ENCODE measurements at regions of chr16 and their contacts with region 1.

Region 1: DNA sequence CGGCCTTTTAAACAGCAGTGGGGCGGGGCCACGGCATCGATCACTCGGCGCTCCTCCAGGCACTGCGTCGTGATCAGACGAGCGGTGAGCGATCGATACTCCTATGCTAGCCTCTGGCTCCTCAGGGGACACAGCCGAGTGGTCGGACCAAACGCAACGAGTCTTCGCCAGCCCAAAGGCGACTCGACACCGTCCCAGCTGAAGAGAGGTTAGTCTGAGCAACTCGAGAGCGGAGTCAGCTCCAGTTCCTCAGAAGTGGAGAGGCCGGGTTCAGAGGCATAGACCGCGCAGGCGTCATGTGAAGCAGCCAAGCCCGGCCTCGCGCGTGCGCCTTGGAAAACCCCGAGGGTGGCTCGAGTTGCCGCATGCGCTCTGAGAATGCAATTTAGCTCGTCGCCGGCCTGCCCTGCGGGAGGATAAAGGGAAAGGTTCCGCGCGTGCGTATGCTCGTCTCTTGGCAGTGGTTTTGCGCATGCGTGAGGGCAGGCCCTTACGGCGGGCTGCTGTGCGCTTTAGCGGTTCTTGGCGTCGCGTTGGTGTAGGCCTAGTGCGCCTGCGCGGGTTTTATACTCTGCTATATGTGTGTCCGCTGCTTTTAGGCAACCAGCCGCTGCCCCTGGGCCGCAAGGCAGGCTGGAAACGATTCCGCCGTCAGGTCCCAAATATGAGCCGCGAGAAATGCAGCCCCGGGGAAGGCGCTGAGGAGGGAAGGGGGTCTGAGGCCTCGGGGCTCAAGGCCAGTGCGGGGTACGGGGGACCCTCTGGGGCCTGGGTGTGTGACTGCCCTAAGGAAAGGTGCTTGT is at the start of gene KDM8:
- DNase-seq: peak; percentile 98 to 100 (median 100)
- ATAC-seq: peak; percentile 79 to 83
- H3K4me3 Mint-ChIP-seq: peak within 1 kb of the TSS; percentile 85 to 100 (median 98)
- H3K27ac Mint-ChIP-seq: peak within 1 kb of the TSS; percentile 97 to 100 (median 100)
- H3K4me1 Mint-ChIP-seq: peaks cover 21 to 70% (median 61%) of the 10 kb centered on the region in 4 donors
- H3K27me3 Mint-ChIP-seq: peaks cover 0 to 3% (median 0%) of the 10 kb centered on the region in 5 donors
- polyA plus RNA-seq, gene KDM8: 3.8 to 6.2 (median 5.6) TPM

Region 2: DNA sequence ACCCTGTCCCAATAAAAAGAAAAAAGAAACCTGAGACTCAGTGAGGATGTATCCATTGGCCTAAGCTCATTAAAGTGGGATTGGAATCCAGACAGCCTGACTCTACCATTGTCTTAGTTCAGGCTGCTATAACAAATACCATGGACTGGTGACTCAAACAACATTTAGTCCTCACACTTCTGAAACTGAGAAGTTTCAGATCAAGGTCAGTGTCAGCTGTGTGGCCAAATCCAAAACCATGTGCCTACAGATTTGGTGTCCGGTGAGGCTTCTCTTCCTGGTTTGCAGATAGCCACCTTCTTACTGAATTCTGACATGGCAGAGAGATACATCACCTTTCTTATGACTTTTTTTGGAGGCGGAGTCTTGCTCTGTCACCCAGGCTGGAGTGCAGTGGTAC is 53.6 kb before region 1 on chr16:
- POLR2A ChIA-PET with region 1: no interaction called
- DNase-seq: no peak
- ATAC-seq: no peak
- H3K4me3 Mint-ChIP-seq: no peak overlapping the region
- H3K27ac Mint-ChIP-seq: no peak overlapping the region
- H3K4me1 Mint-ChIP-seq: peaks cover 7 to 17% (median 11%) of the 10 kb centered on the region in 4 donors
- H3K27me3 Mint-ChIP-seq: peaks cover 0 to 4% (median 0%) of the 10 kb centered on the region in 5 donors

Region 3: GRCh38 chr16:27169511-27170071 is 34.0 kb before region 1 on chr16:
- POLR2A ChIA-PET with region 1: interaction called, 19 read pairs
- DNase-seq: peak; percentile 34 to 91 (median 82)
- ATAC-seq: peak; percentile 92
- H3K4me3 Mint-ChIP-seq: peak overlapping the region; percentile 48 to 80 (median 68)
- H3K27ac Mint-ChIP-seq: peak overlapping the region; percentile 70 to 98 (median 96)
- H3K4me1 Mint-ChIP-seq: peaks cover 26 to 73% (median 67%) of the 10 kb centered on the region in 4 donors
- H3K27me3 Mint-ChIP-seq: no peaks in the 10 kb centered on the region

Region 4: DNA sequence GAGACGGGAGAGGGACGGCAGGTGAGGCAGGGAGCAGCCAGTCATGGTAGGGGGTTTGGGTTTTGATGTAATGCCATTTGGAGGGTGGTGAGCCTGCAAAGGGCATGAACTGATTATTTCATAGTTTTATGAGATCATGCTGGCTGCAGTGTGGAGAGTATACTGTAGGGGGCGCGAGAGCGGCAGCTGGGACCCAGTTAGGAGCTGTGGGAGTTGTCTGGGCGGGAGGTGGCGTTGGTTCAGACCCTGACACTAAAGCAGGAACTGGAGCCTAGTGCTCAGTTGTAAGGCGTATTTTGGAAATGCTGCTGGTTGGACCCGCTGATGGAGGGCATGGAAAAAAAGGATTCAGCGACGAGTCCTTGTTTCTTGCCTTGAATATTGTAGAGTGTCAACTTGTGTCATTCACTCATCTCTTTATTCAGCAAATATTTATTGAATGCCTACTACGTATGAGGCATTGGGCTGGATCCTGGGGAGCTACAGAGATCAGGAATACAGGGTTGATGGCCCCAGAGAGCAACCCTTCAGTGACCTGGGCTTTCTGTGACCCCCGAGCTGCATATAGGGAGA is 24.0 kb before region 1 on chr16:
- POLR2A ChIA-PET with region 1: interaction called, 35 read pairs
- DNase-seq: peak; percentile 76 to 93 (median 86)
- ATAC-seq: peak; percentile 98 to 99
- H3K4me3 Mint-ChIP-seq: peak overlapping the region in 6 of 10 donors; percentile 0 to 30 (median 3)
- H3K27ac Mint-ChIP-seq: peak overlapping the region; percentile 53 to 92 (median 83)
- H3K4me1 Mint-ChIP-seq: peaks cover 23 to 40% (median 36%) of the 10 kb centered on the region in 4 donors
- H3K27me3 Mint-ChIP-seq: no peaks in the 10 kb centered on the region

Region 5: DNA sequence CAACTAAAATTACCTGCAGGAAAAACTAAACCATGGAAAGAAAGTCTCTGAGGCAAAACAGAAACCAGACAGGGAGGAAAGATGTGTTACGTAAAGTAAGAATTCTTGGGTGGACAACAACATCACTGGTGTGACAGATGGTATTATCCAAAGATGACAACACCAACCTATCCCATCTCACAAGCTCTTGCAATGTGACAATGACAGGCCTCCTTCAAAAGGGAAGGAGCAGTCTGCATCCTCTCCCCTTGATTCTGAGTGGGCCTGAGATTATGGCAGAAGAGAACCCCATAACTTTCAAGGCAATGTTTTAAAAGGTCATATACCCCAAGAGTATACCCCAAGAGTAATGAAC is 17.9 kb before region 1 on chr16:
- POLR2A ChIA-PET with region 1: interaction called, 15 read pairs
- DNase-seq: no peak
- ATAC-seq: no peak
- H3K4me3 Mint-ChIP-seq: no peak overlapping the region
- H3K27ac Mint-ChIP-seq: peak overlapping the region in 1 of 10 donors; percentile 32
- H3K4me1 Mint-ChIP-seq: peaks cover 5 to 22% (median 12%) of the 10 kb centered on the region in 4 donors
- H3K27me3 Mint-ChIP-seq: no peaks in the 10 kb centered on the region

Region 6: GRCh38 chr16:27213776-27214427 is 10.3 kb after region 1 on chr16:
- POLR2A ChIA-PET with region 1: interaction called, 10 read pairs
- DNase-seq: no peak
- ATAC-seq: no peak
- H3K4me3 Mint-ChIP-seq: peak overlapping the region in 1 of 10 donors; percentile 26
- H3K27ac Mint-ChIP-seq: peak overlapping the region in 6 of 10 donors; percentile 17 to 93 (median 60)
- H3K4me1 Mint-ChIP-seq: peaks cover 4 to 37% (median 16%) of the 10 kb centered on the region in 4 donors
- H3K27me3 Mint-ChIP-seq: no peaks in the 10 kb centered on the region

Region 7: DNA sequence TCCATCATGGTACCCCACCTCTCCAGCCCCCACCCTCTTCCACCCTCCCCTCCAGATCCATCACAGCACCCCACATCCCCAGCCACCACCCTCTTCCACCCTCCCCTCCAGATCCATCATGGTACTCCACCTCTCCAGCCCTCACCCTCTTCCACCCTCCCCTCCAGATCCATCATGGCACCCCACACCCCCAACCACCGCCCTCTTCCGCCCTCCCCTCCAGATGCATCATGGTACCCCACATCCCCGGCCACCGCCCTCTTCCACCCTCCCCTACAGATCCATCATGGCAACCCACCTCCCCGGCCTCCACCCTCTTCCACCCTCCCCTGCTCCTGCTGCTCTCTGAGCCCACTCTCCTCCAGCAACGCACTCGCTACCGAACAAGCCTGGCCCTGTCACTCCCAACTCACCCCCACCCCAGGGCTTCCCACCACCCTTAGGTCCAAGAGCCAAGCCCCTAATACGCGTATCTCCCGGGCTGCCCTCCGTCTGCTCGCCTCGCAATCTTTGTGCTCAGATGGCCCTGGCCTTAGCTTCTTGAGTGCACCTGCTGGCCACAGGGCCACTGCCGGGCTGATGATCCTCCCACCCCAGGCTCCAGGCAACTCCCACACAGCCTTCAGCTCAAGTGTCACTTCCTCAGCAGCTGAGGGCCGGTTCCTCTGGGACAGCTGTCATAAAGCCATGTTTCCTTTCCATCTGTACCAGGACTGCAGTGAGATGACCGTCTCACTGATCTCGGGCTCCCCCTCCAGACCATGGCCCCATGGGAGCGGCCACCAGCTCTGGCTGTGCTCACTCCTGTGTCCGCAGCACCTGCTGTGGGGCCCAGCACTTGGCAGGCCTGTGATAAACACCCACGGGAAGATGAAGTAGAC is 25.2 kb after region 1 on chr16:
- POLR2A ChIA-PET with region 1: interaction called, 133 read pairs
- DNase-seq: peak in 1 of 10 donors; percentile 50
- ATAC-seq: no peak
- H3K4me3 Mint-ChIP-seq: peak overlapping the region in 8 of 10 donors; percentile 14 to 70 (median 40)
- H3K27ac Mint-ChIP-seq: peak overlapping the region; percentile 74 to 100 (median 94)
- H3K4me1 Mint-ChIP-seq: peaks cover 38 to 83% (median 76%) of the 10 kb centered on the region in 4 donors
- H3K27me3 Mint-ChIP-seq: no peaks in the 10 kb centered on the region

Measured in naive thymus-derived CD8-positive, alpha-beta T cell (primary cell).